WTC11 (cell line): ENCODE measurements at regions of chr10 and their contacts with region 1.

Region 1: GRCh38 chr10:71708301-71708703 is 11.3 kb downstream of the C10orf105 start:
- DNase-seq: peak; percentile 92
- ATAC-seq: peak; percentile 94
- H3K4me3 Mint-ChIP-seq: no peak overlapping the region; the same call in 1 of the 2 replicates
- H3K27ac Mint-ChIP-seq: no peak overlapping the region
- H3K4me1 Mint-ChIP-seq: peaks cover 4% of the 10 kb centered on the region
- H3K27me3 Mint-ChIP-seq: no peaks in the 10 kb centered on the region; the same call in 1 of the 2 replicates
- CTCF ChIP-seq: peak; percentile 84

Region 2: GRCh38 chr10:71396084-71396720 is 312.1 kb before region 1 on chr10:
- CTCF ChIA-PET with region 1: interaction called, 58 read pairs
- POLR2A ChIA-PET with region 1: no interaction called
- DNase-seq: peak; percentile 76
- ATAC-seq: peak; percentile 86
- H3K4me3 Mint-ChIP-seq: peak overlapping the region; percentile 63
- H3K27ac Mint-ChIP-seq: no peak overlapping the region
- H3K4me1 Mint-ChIP-seq: peaks cover 20% of the 10 kb centered on the region
- H3K27me3 Mint-ChIP-seq: peaks cover 59% of the 10 kb centered on the region
- CTCF ChIP-seq: no peak

Region 3: GRCh38 chr10:71569775-71570588 is 138.3 kb before region 1 on chr10:
- CTCF ChIA-PET with region 1: interaction called, 24 read pairs
- POLR2A ChIA-PET with region 1: no interaction called
- DNase-seq: peak; percentile 92
- ATAC-seq: peak; percentile 62
- H3K4me3 Mint-ChIP-seq: no peak overlapping the region
- H3K27ac Mint-ChIP-seq: no peak overlapping the region
- H3K4me1 Mint-ChIP-seq: peaks cover 7% of the 10 kb centered on the region
- H3K27me3 Mint-ChIP-seq: no peaks in the 10 kb centered on the region; the same call in 1 of the 2 replicates
- CTCF ChIP-seq: peak; percentile 91

Region 4: DNA sequence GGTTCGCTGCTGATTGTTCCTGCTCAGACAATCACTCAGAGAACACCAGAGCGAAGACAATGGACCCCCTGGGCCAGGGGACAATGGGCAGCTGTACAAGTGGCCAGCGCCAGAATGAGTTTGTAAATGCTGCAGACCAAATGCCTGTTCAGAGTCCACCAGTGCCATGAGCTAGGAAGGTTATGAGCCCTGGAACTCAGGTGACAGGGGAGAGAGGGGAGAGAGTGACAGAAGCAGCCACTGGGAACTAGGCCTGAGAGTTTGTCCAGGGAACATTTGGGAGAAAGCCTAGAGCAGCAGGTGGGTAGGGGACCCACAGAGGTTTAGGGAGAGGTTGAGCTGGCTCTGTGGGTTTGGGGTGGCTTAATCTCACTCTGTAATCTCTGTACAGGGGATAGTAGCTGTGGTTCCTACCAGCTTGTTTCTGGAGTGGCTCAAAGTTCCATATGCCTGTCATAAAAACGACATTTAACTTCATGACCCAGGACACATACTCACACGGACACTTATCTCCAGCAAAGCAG is 49.1 kb before region 1 on chr10:
- CTCF ChIA-PET with region 1: interaction called, 22 read pairs
- POLR2A ChIA-PET with region 1: no interaction called
- DNase-seq: no peak
- ATAC-seq: peak; percentile 4; the same call in 1 of the 2 replicates
- H3K4me3 Mint-ChIP-seq: no peak overlapping the region
- H3K27ac Mint-ChIP-seq: no peak overlapping the region
- H3K4me1 Mint-ChIP-seq: peaks cover 80% of the 10 kb centered on the region
- H3K27me3 Mint-ChIP-seq: peaks cover 64% of the 10 kb centered on the region
- CTCF ChIP-seq: no peak

Region 5: DNA sequence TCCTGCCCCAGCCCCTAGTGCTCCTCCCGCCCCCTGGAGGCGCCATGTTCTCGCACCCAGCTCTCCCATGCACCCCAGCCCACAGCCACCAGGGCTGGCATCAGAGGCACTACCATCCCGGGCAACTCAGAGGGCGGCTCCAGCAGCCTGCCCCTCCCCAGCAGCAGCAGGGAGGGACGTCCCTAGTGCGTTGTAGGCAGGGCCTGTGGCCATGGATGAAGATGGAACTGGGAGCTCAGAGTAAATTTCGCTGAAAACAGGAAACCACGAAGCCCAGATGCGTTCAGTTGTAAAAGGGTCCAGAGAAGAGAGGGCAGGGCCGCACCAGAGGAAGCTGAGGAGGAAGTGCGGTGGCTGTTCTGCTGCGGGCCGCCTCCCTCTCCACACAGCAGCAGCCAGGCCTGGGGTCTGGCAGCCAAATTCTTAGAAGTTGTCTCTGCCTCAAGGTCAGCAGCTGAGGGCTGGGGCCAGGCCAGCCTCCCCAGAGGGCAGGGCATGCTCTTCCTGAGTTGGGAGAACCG is 40.4 kb after region 1 on chr10:
- CTCF ChIA-PET with region 1: interaction called, 17 read pairs
- POLR2A ChIA-PET with region 1: interaction called, 3 read pairs
- DNase-seq: no peak
- ATAC-seq: peak; percentile 43
- H3K4me3 Mint-ChIP-seq: no peak overlapping the region
- H3K27ac Mint-ChIP-seq: no peak overlapping the region
- H3K4me1 Mint-ChIP-seq: peaks cover 21% of the 10 kb centered on the region
- H3K27me3 Mint-ChIP-seq: no peaks in the 10 kb centered on the region
- CTCF ChIP-seq: no peak

Region 6: GRCh38 chr10:71963756-71964668 is 255.7 kb after region 1 on chr10 and contains the start of gene CHST3:
- CTCF ChIA-PET with region 1: no interaction called
- POLR2A ChIA-PET with region 1: no interaction called
- DNase-seq: peak; percentile 66
- ATAC-seq: peak; percentile 61
- H3K4me3 Mint-ChIP-seq: peak within 1 kb of the TSS; percentile 87
- H3K27ac Mint-ChIP-seq: no peak within 1 kb of the TSS
- H3K4me1 Mint-ChIP-seq: peaks cover 32% of the 10 kb centered on the region
- H3K27me3 Mint-ChIP-seq: peaks cover 49% of the 10 kb centered on the region
- CTCF ChIP-seq: no peak
- total RNA-seq, gene CHST3: 5.6 to 7.0 TPM (median 5.9 TPM) in 3 replicates